ENCODE measurements at regions of chr3 and their contacts with region 1.

Region 1: DNA sequence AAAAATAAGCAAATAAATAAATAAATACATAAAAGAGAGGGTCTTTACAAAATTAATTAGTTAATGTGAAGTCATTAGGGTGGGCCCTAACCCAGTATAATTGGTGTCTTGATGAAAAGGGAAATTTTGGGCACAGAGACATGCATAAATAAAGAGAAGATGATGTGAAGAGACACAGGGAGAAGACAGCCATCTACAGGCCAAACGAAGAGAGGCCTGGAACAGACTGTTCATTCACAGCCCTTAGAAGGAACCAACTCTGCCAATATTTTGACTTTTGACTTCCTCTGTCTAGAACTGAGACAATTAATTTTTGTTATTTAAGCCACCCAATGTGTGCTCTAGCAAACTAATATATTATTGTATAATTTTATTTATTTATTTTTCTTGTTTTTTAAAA is 29.6 kb upstream of the SELENOK start:
- DNase-seq: no peak
- H3K4me3 ChIP-seq: no peak overlapping the region
- H3K27me3 ChIP-seq: no peaks in the 10 kb centered on the region
- CTCF ChIP-seq: peak; percentile 62

Region 2: DNA sequence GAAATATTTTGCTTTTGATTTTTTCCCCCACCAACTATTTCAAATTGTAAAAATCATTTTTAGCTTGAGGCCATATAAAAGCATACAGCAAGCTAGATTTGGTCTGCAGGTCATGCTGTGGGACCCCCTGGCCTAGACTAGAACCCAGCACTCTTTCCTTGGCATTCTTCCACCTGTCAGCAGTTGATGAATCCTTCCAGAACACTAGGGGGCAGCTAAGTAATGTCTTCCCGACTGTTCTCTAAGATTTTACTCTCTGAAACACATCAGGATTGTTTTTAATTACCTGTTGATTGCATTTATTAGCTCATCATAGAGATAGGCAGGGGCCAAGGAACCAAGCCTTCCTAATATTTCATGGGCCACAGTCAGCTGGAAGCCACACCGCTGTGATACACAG is 252.4 kb before region 1 on chr3:
- CTCF ChIA-PET with region 1: interaction called, 13 read pairs
- POLR2A ChIA-PET with region 1: no interaction called
- DNase-seq: no peak
- H3K4me3 ChIP-seq: no peak overlapping the region
- H3K27me3 ChIP-seq: 0 out of 2 replicates have a peak, but pooled peaks cover 1% of the 10 kb centered on the region
- CTCF ChIP-seq: peak; percentile 50

Measured in BJ (cell line).